Caco-2 (cell line): ENCODE measurements at regions of chr4 and their contacts with region 1.

Region 1: DNA sequence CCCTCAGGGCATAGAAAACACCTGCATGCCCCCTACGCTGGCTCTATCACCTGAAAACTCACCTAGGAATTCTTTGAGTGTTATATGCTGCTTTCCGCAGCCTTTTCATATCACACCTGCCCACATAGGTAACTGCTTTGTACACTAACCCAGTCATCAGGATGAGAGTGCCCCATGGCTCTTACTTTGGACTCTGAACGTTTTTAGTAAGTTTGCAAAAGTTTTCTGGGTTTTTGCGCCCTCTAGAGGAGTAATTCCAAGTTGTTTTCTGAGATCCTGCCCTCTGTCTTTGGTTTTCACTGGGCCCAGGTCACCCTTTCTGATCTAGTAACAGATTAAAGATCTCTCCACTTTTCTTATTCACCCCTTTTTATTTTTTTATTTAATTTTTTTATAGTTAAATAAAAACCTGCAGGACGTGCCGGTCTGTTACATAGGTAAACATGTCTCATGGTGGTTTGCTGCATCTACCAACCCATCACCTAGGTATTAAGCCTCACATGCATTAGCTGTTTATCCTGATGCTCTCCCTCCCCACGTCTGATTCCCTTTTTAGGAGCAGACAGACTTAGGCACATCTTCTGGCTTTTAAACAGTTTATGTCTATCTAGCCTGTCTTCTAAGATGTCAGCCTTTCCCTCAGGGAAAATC is 139.2 kb downstream of the NWD2 start:
- DNase-seq: peak in 1 of 2 experiments; percentile 65
- H3K4me3 ChIP-seq: no peak overlapping the region
- H3K4me3 Mint-ChIP-seq: no peak overlapping the region
- H3K27ac Mint-ChIP-seq: no peak overlapping the region
- H3K4me1 ChIP-seq: no peaks in the 10 kb centered on the region
- H3K4me1 Mint-ChIP-seq: no peaks in the 10 kb centered on the region
- H3K27me3 ChIP-seq: no peaks in the 10 kb centered on the region
- H3K27me3 Mint-ChIP-seq: peaks cover 9% of the 10 kb centered on the region
- CTCF ChIP-seq: peak; percentile 52 to 75

Region 2: GRCh38 chr4:36351082-36351666 is 1032.5 kb before region 1 on chr4:
- CTCF ChIA-PET with region 1: no interaction called
- POLR2A ChIA-PET with region 1: no interaction called
- intact Hi-C with region 1: loop called (anchors 2 kb)
- DNase-seq: peak; percentile 55 to 56
- H3K4me3 ChIP-seq: no peak overlapping the region
- H3K4me3 Mint-ChIP-seq: no peak overlapping the region
- H3K27ac Mint-ChIP-seq: no peak overlapping the region
- H3K4me1 ChIP-seq: no peaks in the 10 kb centered on the region
- H3K4me1 Mint-ChIP-seq: no peaks in the 10 kb centered on the region
- H3K27me3 ChIP-seq: no peaks in the 10 kb centered on the region
- H3K27me3 Mint-ChIP-seq: peaks cover 2% of the 10 kb centered on the region
- CTCF ChIP-seq: peak; percentile 64 to 68

Region 3: GRCh38 chr4:36414248-36414647 is 969.5 kb before region 1 on chr4:
- CTCF ChIA-PET with region 1: no interaction called
- POLR2A ChIA-PET with region 1: no interaction called
- intact Hi-C with region 1: loop called (anchors 2 kb)
- DNase-seq: no peak
- H3K4me3 ChIP-seq: no peak overlapping the region
- H3K4me3 Mint-ChIP-seq: no peak overlapping the region
- H3K27ac Mint-ChIP-seq: no peak overlapping the region
- H3K4me1 ChIP-seq: no peaks in the 10 kb centered on the region
- H3K4me1 Mint-ChIP-seq: no peaks in the 10 kb centered on the region
- H3K27me3 ChIP-seq: no peaks in the 10 kb centered on the region
- H3K27me3 Mint-ChIP-seq: peaks cover 10% of the 10 kb centered on the region
- CTCF ChIP-seq: peak; percentile 20 to 26

Region 4: GRCh38 chr4:36722986-36723385 is 660.7 kb before region 1 on chr4:
- CTCF ChIA-PET with region 1: no interaction called
- POLR2A ChIA-PET with region 1: no interaction called
- intact Hi-C with region 1: loop called (anchors 2 kb)
- DNase-seq: no peak
- H3K4me3 ChIP-seq: no peak overlapping the region
- H3K4me3 Mint-ChIP-seq: no peak overlapping the region
- H3K27ac Mint-ChIP-seq: no peak overlapping the region
- H3K4me1 ChIP-seq: no peaks in the 10 kb centered on the region
- H3K4me1 Mint-ChIP-seq: no peaks in the 10 kb centered on the region
- H3K27me3 ChIP-seq: no peaks in the 10 kb centered on the region
- H3K27me3 Mint-ChIP-seq: peaks cover 2% of the 10 kb centered on the region
- CTCF ChIP-seq: no peak

Region 5: GRCh38 chr4:37068580-37068979 is 315.1 kb before region 1 on chr4:
- CTCF ChIA-PET with region 1: no interaction called
- POLR2A ChIA-PET with region 1: no interaction called
- intact Hi-C with region 1: loop called (anchors 1 kb)
- DNase-seq: peak in 1 of 2 experiments; percentile 38
- H3K4me3 ChIP-seq: no peak overlapping the region
- H3K4me3 Mint-ChIP-seq: no peak overlapping the region
- H3K27ac Mint-ChIP-seq: no peak overlapping the region
- H3K4me1 ChIP-seq: no peaks in the 10 kb centered on the region
- H3K4me1 Mint-ChIP-seq: no peaks in the 10 kb centered on the region
- H3K27me3 ChIP-seq: no peaks in the 10 kb centered on the region
- H3K27me3 Mint-ChIP-seq: no peaks in the 10 kb centered on the region
- CTCF ChIP-seq: peak; percentile 27 to 45

Region 6: GRCh38 chr4:37188100-37188499 is 195.6 kb before region 1 on chr4:
- CTCF ChIA-PET with region 1: no interaction called
- POLR2A ChIA-PET with region 1: no interaction called
- intact Hi-C with region 1: loop called (anchors 1 kb)
- DNase-seq: peak in 1 of 2 experiments; percentile 14
- H3K4me3 ChIP-seq: no peak overlapping the region
- H3K4me3 Mint-ChIP-seq: no peak overlapping the region
- H3K27ac Mint-ChIP-seq: no peak overlapping the region
- H3K4me1 ChIP-seq: no peaks in the 10 kb centered on the region
- H3K4me1 Mint-ChIP-seq: no peaks in the 10 kb centered on the region
- H3K27me3 ChIP-seq: no peaks in the 10 kb centered on the region
- H3K27me3 Mint-ChIP-seq: peaks cover 2% of the 10 kb centered on the region
- CTCF ChIP-seq: peak in 1 of 2 experiments; percentile 11

Region 7: DNA sequence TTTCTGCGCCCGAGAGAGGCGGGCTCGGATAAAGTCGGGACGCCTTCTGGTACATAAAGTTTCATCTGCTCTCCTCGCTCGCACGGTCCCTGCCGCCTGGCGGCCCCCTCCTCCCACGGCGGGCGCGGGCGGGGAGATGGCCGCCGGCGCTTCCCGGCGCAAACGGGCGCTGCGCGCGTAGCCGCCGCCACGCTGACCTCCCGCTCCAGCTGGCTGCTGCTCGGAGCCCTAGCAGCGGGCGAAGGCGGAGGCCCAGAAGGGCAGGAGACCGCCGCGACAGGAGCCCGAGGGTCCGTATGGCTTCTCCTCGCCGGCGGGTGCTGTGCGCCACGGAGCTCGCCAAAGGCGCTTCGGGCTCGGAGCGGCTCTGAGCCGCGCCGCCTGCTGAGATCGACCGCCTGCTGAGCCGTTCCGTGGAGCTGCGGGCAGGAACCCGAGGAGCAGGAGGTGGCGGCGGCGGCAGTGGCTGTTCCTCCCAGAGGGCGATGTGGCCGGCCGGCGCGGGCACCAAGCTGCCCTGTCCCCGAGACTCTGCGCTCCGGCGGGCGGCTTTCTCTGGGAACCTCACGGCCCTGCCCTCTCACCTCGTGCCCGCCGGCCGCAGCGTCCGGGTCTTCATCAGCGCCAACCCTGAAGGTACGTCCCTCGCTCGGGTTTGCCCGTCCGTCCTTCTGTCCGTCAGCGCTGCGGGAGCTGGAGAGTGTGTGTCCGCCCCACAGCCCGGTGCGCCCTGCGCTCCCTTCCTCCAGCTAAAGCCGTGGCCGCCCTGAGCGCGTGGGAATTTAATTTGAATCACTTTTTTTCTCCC is 138.9 kb before region 1 on chr4 and contains the start of gene NWD2:
- CTCF ChIA-PET with region 1: no interaction called
- POLR2A ChIA-PET with region 1: no interaction called
- intact Hi-C with region 1: loop called (anchors 5 kb)
- DNase-seq: peak in 1 of 2 experiments; percentile 35
- H3K4me3 ChIP-seq: 0 out of 2 replicates have a peak within 1 kb of the TSS, but pooled peaks have one; percentile 23
- H3K4me3 Mint-ChIP-seq: peak within 1 kb of the TSS; percentile 63
- H3K27ac Mint-ChIP-seq: no peak within 1 kb of the TSS
- H3K4me1 ChIP-seq: no peaks in the 10 kb centered on the region
- H3K4me1 Mint-ChIP-seq: no peaks in the 10 kb centered on the region
- H3K27me3 ChIP-seq: no peaks in the 10 kb centered on the region; the same call in 1 of the 2 replicates
- H3K27me3 Mint-ChIP-seq: peaks cover 30% of the 10 kb centered on the region
- CTCF ChIP-seq: no peak
- total RNA-seq, gene NWD2: not detected in 2 replicates

Region 8: GRCh38 chr4:37516057-37516775 is 132.5 kb after region 1 on chr4:
- CTCF ChIA-PET with region 1: no interaction called
- POLR2A ChIA-PET with region 1: no interaction called
- intact Hi-C with region 1: no loop called
- DNase-seq: no peak
- H3K4me3 ChIP-seq: no peak overlapping the region
- H3K4me3 Mint-ChIP-seq: no peak overlapping the region
- H3K27ac Mint-ChIP-seq: no peak overlapping the region
- H3K4me1 ChIP-seq: no peaks in the 10 kb centered on the region
- H3K4me1 Mint-ChIP-seq: no peaks in the 10 kb centered on the region
- H3K27me3 ChIP-seq: no peaks in the 10 kb centered on the region
- H3K27me3 Mint-ChIP-seq: no peaks in the 10 kb centered on the region
- CTCF ChIP-seq: no peak